ENCODE measurements at regions of chr19 and their contacts with region 1.

Region 1: GRCh38 chr19:48608798-48609263 is 2.3 kb downstream of the SPACA4 start:
- DNase-seq: peak; percentile 74 to 82 (median 81)
- H3K4me3 ChIP-seq: peak overlapping the region in 4 of 7 experiments; percentile 20 to 70 (median 54)
- H3K27ac ChIP-seq: no peak overlapping the region
- H3K4me1 ChIP-seq: peaks cover 0 to 8% (median 0%) of the 10 kb centered on the region in 4 experiments
- H3K27me3 ChIP-seq: no peaks in the 10 kb centered on the region

Region 2: GRCh38 chr19:48596679-48597465 is 12.0 kb before region 1 on chr19:
- CTCF ChIA-PET with region 1: interaction called, 25 read pairs
- POLR2A ChIA-PET with region 1: interaction called, 4 read pairs
- DNase-seq: peak in 2 of 3 donors; percentile 73 to 76
- H3K4me3 ChIP-seq: no peak overlapping the region
- H3K27ac ChIP-seq: no peak overlapping the region
- H3K4me1 ChIP-seq: peaks cover 0 to 2% (median 0%) of the 10 kb centered on the region in 4 experiments
- H3K27me3 ChIP-seq: no peaks in the 10 kb centered on the region

Region 3: DNA sequence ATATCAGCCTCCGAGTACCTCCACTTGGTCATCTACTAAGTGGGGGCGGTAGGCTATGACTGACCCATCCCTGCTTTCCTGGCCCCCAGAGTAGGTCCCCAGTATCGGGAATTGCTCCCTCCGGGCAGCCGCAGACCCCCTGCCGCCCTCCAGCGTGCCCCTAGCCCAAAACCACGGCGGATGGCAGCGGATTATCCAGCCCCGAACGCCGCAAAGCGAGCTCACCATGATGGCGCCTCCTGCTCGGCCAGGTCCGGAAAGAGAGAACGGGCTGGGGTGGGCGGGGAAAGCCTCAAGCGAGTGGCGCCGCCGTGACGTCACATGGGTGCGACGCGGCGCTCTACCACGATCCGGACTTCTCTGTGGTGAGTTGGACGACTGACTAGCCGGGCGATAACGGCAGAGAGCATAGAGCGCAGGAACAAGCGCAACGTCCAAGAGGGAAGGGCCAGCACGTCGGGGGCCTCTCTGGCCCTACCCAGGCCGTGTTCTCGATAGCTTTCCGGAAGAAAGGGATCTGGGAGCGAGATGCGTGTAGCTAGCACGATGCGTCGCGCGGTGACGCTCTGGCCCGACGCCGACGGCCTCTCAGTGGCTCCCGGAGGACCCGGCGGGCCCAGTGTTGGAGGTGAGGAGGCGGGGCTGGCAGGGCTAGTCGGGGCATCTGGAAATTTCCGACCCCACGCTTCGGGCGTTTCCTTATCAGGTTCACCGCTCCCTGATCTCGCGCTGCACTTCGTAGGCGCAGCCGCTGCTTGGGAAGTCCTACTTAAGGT is 10.3 kb after region 1 on chr19 and contains the starts of genes RPL18 and SPHK2:
- CTCF ChIA-PET with region 1: interaction called, 14 read pairs
- POLR2A ChIA-PET with region 1: no interaction called
- DNase-seq: peak; percentile 100
- H3K4me3 ChIP-seq: peak within 1 kb of the TSS; percentile 83 to 100 (median 97)
- H3K27ac ChIP-seq: peak within 1 kb of the TSS; percentile 87 to 98
- H3K4me1 ChIP-seq: peaks cover 7 to 45% (median 35%) of the 10 kb centered on the region in 4 experiments
- H3K27me3 ChIP-seq: no peaks in the 10 kb centered on the region

Measured in common myeloid progenitor, CD34-positive (primary cell).